Aorta (tissue), 5 donors: ENCODE measurements at regions of chr1 and their contacts with region 1.

Region 1: DNA sequence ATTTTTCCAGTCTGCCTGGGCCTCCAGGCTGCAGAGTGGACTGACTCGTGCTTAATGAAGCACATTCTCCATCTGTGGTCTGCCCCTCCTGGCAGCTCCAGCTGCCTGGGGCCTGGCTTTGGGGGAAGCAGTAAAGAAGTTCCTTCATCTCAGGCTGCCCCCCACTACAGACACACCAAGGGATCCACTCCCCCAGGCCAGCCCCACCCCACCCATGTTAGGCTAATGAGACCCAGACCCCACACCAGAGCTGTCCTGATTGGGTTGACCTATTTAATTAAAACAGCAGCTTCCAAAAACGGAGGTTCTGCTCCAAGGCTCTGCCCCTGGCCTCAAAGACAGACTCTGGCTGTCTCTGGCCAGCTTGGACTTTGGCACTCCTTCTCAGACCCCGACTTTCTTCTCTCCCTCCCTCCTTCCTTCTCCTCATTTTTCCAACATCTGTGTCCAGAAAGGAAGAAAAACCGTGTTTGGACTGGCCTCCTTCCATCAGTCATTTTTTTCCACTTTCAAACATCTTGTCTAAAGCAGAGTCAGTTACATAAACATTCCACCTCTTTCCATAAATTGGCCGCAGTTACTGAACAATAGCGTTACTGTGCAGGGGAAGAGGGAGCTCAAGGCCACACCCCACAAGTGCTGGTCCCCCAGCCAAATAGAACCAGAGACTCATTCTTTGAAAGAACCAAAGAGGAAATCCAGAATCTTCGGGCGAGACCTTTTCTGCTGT is 29.7 kb downstream of the SERTAD4 start:
- DNase-seq: peak in 1 of 2 donors; percentile 73
- ATAC-seq: peak; percentile 78
- H3K4me3 ChIP-seq: no peak overlapping the region
- H3K27ac ChIP-seq: peak overlapping the region in 1 of 2 donors; percentile 86
- H3K4me1 ChIP-seq: peaks cover 0 to 4% of the 10 kb centered on the region in 2 donors
- H3K27me3 ChIP-seq: no peaks in the 10 kb centered on the region

Region 2: GRCh38 chr1:210239349-210240111 is 22.8 kb before region 1 on chr1:
- intact Hi-C with region 1: loop called in 1 of 2 experiments (anchors 2 kb)
- DNase-seq: peak in 1 of 2 donors; percentile 67
- ATAC-seq: no peak
- H3K4me3 ChIP-seq: no peak overlapping the region
- H3K27ac ChIP-seq: peak overlapping the region in 1 of 2 donors; percentile 65
- H3K4me1 ChIP-seq: peaks cover 3% of the 10 kb centered on the region in 2 donors
- H3K27me3 ChIP-seq: no peaks in the 10 kb centered on the region

Region 3: GRCh38 chr1:210464519-210465039 is 202.2 kb after region 1 on chr1:
- intact Hi-C with region 1: no loop called
- DNase-seq: no peak
- ATAC-seq: no peak
- H3K4me3 ChIP-seq: no peak overlapping the region
- H3K27ac ChIP-seq: no peak overlapping the region
- H3K4me1 ChIP-seq: no peaks in the 10 kb centered on the region
- H3K27me3 ChIP-seq: no peaks in the 10 kb centered on the region